Breast epithelium (tissue), 4 donors: ENCODE measurements at regions of chr2 and their contacts with region 1.

Region 1: GRCh38 chr2:44347526-44347925 is 13.8 kb downstream of the PREPL start:
- DNase-seq: no peak
- H3K4me3 ChIP-seq: no peak overlapping the region
- H3K27ac ChIP-seq: no peak overlapping the region
- H3K4me1 ChIP-seq: no peaks in the 10 kb centered on the region
- H3K27me3 ChIP-seq: no peaks in the 10 kb centered on the region
- CTCF ChIP-seq: no peak
- POLR2A ChIP-seq: no peak

Region 2: GRCh38 chr2:42987112-42987922 is 1360.2 kb before region 1 on chr2:
- intact Hi-C with region 1: no loop called
- DNase-seq: no peak
- H3K4me3 ChIP-seq: no peak overlapping the region
- H3K27ac ChIP-seq: peak overlapping the region in 1 of 2 donors; percentile 4
- H3K4me1 ChIP-seq: no peaks in the 10 kb centered on the region
- H3K27me3 ChIP-seq: no peaks in the 10 kb centered on the region
- CTCF ChIP-seq: no peak
- POLR2A ChIP-seq: no peak

Region 3: DNA sequence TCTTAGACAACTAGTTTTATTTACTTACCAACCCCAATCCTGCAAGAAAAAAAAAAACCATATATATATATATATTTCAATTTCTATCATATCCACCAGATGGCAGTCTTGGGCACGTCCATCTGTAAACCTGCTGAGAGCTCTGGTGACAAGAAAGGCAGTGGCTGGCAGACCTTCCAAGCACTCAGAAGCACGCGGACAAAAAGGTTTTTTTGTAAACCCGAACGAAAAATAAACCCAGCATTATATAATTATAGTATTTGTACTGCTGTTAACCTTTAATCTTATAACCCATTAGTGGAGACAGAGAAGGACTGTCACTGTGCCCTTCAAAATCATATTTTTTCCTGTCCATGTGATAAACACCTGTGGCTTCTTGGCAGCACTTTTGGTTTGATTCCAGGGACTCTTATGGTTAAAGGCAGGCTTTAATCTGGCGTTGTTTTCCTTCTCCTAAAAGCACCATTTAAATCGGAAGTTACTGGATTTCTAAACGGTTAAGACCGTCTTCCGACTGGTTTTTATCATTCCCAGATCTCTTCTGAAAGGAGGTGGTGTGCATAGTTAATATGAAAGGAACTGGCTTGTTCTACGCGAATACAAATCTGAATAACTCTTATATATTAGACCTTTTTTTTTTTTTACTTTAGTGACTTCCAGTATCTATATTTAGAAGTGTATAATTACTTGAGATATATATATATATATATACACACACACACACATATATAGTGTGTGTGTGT is 103.2 kb before region 1 on chr2:
- intact Hi-C with region 1: no loop called
- DNase-seq: peak; percentile 50 to 53
- H3K4me3 ChIP-seq: peak overlapping the region; percentile 15 to 62 (median 37)
- H3K27ac ChIP-seq: peak overlapping the region in 1 of 2 donors; percentile 61
- H3K4me1 ChIP-seq: no peaks in the 10 kb centered on the region
- H3K27me3 ChIP-seq: no peaks in the 10 kb centered on the region
- CTCF ChIP-seq: peak in 2 of 3 donors; percentile 37 to 62
- POLR2A ChIP-seq: no peak

Region 4: DNA sequence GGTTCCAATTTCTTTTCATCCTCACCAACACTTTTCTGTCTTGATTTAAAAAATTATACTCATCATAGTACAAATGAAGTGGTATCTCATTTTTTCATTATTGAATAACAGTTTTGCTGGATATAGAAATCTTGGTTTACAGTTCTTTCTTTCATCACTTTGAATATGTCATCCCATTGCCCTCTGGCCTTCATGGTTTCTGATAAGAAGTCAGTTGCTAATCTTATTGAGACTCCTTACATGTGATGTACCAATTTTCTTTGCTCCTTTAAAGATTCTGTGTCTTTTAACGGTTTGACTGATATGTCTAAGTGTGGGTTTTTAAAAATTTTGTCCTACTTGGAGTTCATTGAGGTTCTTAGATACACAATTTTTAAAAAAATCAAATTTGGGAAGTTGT is 37.2 kb before region 1 on chr2:
- intact Hi-C with region 1: loop called (anchors 2 kb)
- DNase-seq: no peak
- H3K4me3 ChIP-seq: no peak overlapping the region
- H3K27ac ChIP-seq: no peak overlapping the region
- H3K4me1 ChIP-seq: no peaks in the 10 kb centered on the region
- H3K27me3 ChIP-seq: no peaks in the 10 kb centered on the region
- CTCF ChIP-seq: no peak
- POLR2A ChIP-seq: no peak